GM10248 (cell line): ENCODE measurements at regions of chr10 and their contacts with region 1.

Region 1: DNA sequence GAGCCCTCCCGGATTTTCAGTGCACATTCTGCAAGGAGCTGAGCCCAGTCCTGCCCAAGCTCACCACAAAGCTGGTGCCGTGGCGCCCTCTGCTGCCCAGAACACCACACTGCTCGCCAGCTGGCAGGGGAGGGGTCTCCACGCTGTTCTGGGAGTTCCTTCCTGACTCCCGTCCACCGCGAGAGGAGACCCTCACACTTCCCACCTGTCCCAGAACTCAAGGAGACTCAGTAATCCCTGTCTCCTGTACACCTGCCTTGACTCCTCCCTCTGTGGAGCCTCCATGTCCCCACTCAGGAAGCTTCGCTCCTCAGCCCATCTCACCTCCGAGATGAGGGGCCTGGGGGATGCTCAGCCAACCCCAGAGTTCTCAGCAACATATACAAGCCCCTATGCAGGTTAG is 11.3 kb downstream of the C10orf105 start:
- DNase-seq: peak; percentile 78
- CTCF ChIP-seq: peak; percentile 87

Region 2: DNA sequence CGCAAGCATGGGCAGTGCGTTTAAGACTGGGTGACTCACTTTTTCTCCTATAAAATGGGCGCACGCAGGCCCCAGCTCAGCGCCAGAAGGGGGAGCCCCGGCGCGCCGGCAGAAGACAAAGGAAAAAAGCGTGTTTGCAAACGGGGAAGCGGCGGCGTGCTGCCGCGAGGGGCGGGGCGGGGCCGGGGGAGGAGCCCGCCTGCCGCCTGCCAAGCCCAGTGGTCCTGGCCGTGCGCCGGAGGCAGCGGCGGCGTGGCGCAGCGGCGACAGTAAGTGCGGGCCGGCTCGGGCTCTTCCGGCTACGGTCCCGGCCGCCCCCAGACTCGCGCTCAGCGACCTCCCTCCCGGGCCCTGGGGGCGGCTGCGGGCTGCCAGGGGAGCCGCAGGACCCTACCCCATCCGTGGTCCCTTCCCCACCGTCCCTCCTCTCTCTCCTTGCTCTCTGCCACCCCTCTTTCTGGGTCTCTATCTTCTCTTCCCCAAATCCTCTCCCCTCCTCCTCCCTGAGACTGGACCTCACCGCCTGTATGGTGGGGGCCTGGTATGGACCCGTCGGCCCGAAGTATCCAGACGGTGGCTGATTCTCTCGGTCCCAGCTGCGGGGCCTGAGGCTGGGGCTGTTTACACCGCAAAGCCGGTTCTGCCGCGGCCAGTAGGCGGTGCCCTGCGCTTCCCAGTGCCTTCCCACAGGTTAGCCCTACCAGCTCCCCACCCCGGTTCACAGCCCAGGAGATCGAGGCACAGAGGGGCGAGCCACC is 389.1 kb before region 1 on chr10 and contains the start of gene SLC29A3:
- CTCF ChIA-PET with region 1: interaction called, 68 read pairs
- POLR2A ChIA-PET with region 1: interaction called, 3 read pairs
- DNase-seq: peak; percentile 94
- CTCF ChIP-seq: peak; percentile 84

Region 3: GRCh38 chr10:71383972-71384687 is 324.2 kb before region 1 on chr10:
- CTCF ChIA-PET with region 1: interaction called, 32 read pairs
- POLR2A ChIA-PET with region 1: no interaction called
- DNase-seq: peak; percentile 79
- CTCF ChIP-seq: peak; percentile 98

Region 4: DNA sequence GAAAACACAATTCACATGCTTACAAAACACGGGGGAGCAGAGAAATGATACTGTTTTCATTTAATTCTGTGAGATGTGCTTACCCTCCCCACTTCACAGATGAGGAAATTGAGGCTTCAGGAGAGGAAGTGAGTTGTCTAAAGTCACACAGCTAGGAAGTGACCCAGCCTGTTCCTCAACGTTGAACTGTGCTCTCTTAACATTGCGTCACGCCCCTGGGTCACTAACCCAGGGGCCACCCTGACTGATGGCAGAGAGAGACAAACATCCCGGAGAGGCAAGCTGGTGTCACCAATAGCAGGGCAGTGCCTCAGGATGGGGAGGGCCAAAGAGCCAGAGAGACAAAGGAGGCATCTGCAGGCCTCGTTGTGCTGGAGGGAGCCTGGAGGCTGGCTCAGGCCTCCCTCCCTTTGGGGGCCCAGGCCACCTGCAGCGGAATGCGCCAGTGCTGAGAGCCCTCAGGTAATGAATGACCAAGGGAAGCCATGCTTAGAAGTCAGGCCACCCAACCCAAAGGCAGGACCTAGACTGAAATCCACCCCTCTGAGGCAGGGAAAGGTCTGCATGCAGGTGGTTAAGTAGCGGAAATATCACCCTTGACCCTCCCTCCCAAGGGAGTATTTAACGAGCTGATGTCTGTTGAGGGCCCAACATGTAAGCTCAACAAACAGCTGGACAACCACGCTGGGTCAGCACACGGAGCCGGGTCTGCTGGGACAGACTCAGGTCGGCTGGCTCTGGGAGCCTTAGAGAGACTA is 70.1 kb before region 1 on chr10:
- CTCF ChIA-PET with region 1: interaction called, 10 read pairs
- POLR2A ChIA-PET with region 1: no interaction called
- DNase-seq: peak; percentile 52
- CTCF ChIP-seq: no peak

Region 5: DNA sequence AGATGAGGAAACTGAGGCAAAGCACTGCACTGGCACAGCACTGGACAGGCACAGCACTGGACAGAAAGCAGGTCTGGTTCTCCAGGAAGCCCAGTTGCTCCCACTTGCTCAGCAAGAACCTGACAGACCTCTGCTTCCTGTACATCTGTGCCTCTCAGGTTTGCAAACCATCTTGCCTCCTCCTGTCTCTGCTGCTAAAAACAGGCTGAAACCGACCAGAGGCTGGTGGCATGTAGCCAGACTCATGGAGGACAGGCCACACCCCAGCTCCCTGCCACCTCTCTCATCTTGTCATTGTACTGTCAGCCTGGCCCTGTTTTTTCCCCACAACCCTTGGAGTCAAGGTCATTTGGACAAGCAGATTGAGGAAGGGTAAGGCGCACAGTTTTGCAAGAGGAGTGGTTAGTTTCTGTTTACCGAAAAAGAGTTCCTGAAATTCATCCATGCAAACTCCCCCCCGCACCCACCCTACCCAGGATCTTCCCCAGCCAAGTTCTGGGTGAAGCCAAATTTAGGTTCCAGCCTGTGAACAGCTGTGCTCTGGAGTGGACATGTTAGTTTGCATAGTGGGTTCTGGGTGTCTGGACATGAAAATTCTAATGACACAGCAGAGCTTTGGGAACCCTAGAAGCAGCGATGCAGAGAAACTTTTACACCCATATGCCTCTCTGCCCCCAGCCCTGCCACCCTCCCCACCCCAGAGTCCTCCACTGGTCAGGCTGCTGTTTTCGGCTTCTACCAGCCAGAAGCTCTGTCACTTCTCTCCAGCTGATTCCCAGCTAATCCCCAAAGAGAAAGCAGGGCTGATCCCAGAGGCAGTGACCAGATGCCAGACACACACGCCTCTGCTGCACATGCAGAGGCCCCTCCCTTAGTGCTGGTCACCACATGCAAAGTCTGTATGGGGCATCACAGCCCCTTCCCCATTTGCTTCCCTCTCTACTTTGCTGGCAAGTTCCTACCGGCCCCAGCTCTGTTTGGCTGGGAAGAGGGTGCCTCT is 19.7 kb after region 1 on chr10:
- CTCF ChIA-PET with region 1: interaction called, 23 read pairs
- POLR2A ChIA-PET with region 1: interaction called, 5 read pairs
- DNase-seq: peak; percentile 77
- CTCF ChIP-seq: no peak

Region 6: GRCh38 chr10:71911296-71911953 is 203.1 kb after region 1 on chr10:
- CTCF ChIA-PET with region 1: no interaction called
- POLR2A ChIA-PET with region 1: no interaction called
- DNase-seq: no peak
- CTCF ChIP-seq: no peak